Activated CD4-positive, alpha-beta T cell treated with anti-CD3 and anti-CD28 coated beads for 36 hours (primary cell): ENCODE measurements at regions of chr6 and their contacts with region 1.

Region 1: DNA sequence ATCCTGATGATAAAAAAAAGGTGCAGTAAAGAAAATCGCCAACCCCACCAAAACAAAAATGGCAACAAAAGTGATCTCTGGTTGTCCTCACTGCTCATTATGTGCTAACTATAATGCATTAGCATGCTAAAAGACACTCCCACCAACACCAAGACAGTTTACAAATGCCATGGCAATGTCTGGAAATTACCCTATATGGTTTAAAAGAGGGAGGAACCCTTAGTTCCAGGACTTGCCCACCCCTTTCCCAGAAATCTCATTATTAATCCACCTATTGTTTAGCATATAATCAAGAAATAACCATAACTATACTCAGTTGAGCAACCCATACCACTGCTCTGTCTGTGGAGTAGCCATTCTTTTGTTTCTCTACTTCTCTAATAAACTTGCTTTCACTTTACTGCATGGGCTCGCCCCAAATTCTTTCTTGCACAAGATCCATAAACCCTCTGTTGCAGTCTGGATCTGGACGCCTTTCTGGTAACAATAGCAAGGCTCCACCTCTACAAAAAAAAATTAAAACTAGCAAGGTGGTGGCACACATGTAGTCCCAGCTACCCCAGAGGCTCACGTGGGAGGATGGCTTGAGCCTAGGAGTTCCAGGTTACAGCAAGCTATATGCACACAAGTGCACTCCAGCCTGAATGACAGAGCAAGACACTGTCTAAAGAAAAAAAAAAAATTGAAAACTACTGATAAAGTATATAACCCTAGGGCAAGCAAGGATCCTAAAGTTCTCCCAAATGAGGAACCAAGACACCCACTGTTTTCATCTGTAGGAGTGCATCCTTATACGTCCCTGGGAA is 278.8 kb upstream of the JARID2 start:
- DNase-seq: no peak
- ATAC-seq: no peak
- H3K4me3 Mint-ChIP-seq: no peak overlapping the region
- H3K27ac Mint-ChIP-seq: no peak overlapping the region
- H3K4me1 Mint-ChIP-seq: no peaks in the 10 kb centered on the region
- H3K27me3 Mint-ChIP-seq: no peaks in the 10 kb centered on the region

Region 2: GRCh38 chr6:13248053-13248452 is 1719.1 kb before region 1 on chr6:
- CTCF ChIA-PET with region 1: no interaction called
- POLR2A ChIA-PET with region 1: interaction called, 14 read pairs
- intact Hi-C with region 1: no loop called
- DNase-seq: no peak
- ATAC-seq: no peak
- H3K4me3 Mint-ChIP-seq: no peak overlapping the region
- H3K27ac Mint-ChIP-seq: no peak overlapping the region
- H3K4me1 Mint-ChIP-seq: no peaks in the 10 kb centered on the region
- H3K27me3 Mint-ChIP-seq: peaks cover 2% of the 10 kb centered on the region

Region 3: DNA sequence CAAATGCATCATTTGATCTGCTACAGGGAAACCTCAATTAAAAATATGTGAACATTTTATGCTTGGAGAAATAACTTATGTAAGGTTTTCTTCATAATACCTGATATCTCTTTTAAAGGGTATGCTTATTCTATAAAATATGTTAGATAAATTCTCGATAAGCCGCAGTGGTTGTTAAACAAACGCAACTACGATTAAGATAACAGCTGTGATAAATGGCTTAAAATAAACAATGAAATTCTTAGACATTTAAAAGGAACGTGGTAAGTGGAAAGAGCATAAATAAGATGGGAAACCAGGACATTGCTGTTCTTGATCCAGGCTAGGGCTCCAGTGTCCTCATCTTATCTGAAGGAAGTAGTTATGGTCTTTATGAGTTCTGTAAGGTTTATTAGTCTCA is 433.7 kb before region 1 on chr6:
- CTCF ChIA-PET with region 1: no interaction called
- POLR2A ChIA-PET with region 1: no interaction called
- intact Hi-C with region 1: no loop called
- DNase-seq: no peak
- ATAC-seq: no peak
- H3K4me3 Mint-ChIP-seq: no peak overlapping the region
- H3K27ac Mint-ChIP-seq: no peak overlapping the region
- H3K4me1 Mint-ChIP-seq: peaks cover 15% of the 10 kb centered on the region
- H3K27me3 Mint-ChIP-seq: no peaks in the 10 kb centered on the region

Region 4: GRCh38 chr6:14984519-14984853 is 17.4 kb after region 1 on chr6:
- CTCF ChIA-PET with region 1: no interaction called
- POLR2A ChIA-PET with region 1: no interaction called
- intact Hi-C with region 1: no loop called
- DNase-seq: no peak
- ATAC-seq: no peak
- H3K4me3 Mint-ChIP-seq: no peak overlapping the region
- H3K27ac Mint-ChIP-seq: no peak overlapping the region
- H3K4me1 Mint-ChIP-seq: peaks cover 3% of the 10 kb centered on the region
- H3K27me3 Mint-ChIP-seq: peaks cover 2% of the 10 kb centered on the region